PC-9 (cell line): ENCODE measurements at regions of chr10 and their contacts with region 1.

Region 1: DNA sequence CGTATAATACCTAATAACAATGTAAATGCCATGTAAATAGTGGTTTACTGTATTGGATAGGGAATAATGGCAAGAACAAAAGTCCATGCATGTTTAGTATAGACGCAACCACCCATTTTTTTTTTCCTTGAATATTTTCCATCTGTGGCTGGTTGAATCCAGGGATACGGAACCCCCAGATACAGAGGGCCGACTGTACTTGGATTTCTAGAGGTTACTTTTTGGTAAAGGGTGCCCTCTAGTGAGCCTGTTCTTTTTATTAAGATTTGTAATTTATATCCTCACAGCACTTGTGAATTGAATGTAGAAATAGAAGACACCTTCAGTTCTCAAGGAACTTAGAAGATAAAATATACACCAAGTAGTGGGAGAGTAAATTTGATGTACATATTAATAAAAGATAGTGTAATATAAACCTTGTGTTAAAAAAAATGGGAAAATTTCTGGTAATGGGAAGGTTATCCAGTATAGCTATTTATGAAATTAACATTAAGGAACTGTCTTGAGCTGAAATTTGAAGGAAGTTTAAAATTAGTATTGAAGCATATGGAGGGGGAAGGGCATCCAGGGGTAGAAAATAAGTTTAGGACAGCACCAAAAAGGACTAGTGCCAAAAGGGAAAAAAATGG is 32.0 kb downstream of the EXOC6 start:
- DNase-seq: peak in 1 of 2 experiments; percentile 9
- H3K4me3 ChIP-seq: no peak overlapping the region
- H3K27ac ChIP-seq: no peak overlapping the region
- H3K4me1 ChIP-seq: no peaks in the 10 kb centered on the region
- H3K27me3 ChIP-seq: no peaks in the 10 kb centered on the region
- CTCF ChIP-seq: peak; percentile 76

Region 2: GRCh38 chr10:92517034-92517655 is 363.2 kb before region 1 on chr10:
- CTCF ChIA-PET with region 1: no interaction called
- POLR2A ChIA-PET with region 1: no interaction called
- intact Hi-C with region 1: loop called (anchors 2 kb)
- DNase-seq: peak; percentile 22 to 39
- H3K4me3 ChIP-seq: no peak overlapping the region
- H3K27ac ChIP-seq: no peak overlapping the region
- H3K4me1 ChIP-seq: no peaks in the 10 kb centered on the region
- H3K27me3 ChIP-seq: no peaks in the 10 kb centered on the region
- CTCF ChIP-seq: peak; percentile 79

Region 3: DNA sequence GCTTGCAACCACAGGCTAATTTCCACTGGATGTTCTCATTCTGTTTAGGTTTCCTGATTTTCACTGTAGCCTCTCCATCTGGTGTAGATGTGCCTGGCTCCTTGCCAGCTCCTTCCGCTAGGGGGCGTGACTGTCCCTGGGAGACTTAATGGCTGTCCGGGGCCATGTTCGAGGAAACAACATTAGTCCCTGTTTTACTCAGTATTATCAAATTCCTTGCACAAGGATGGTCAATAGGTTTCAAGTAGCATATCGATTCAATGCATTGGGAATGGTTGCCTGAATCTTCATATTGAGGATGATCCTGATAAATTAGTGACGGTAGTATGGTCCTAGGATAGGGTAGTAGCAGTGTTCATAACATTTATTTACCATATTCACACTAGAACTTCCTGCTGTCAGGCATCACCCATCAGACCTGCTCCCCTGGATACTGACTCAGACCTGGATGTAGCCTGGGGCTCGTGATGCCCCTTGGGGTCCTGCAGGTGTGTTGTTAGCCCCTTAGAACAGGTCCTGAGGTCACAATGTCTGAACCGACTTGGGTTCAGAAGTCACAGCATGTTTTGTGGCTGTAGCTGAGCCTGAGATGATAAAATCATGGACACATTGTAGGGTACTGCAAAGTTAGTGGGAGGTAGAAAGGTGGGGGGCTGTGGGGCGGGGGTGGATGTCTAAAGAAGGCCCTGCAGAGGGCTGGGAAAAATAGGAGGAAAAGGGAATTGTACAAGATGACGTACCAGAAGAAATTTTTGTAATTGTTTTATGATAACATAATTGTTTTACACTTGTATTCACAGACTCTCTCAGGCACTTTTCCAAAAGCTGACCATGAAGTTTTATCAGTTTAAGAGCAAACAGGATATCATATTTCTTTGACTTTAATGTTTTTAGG is 40.9 kb before region 1 on chr10:
- CTCF ChIA-PET with region 1: interaction called, 4 read pairs
- POLR2A ChIA-PET with region 1: no interaction called
- intact Hi-C with region 1: loop called (anchors 5 kb)
- DNase-seq: no peak
- H3K4me3 ChIP-seq: no peak overlapping the region
- H3K27ac ChIP-seq: no peak overlapping the region
- H3K4me1 ChIP-seq: peaks cover 8% of the 10 kb centered on the region
- H3K27me3 ChIP-seq: no peaks in the 10 kb centered on the region
- CTCF ChIP-seq: no peak

Region 4: DNA sequence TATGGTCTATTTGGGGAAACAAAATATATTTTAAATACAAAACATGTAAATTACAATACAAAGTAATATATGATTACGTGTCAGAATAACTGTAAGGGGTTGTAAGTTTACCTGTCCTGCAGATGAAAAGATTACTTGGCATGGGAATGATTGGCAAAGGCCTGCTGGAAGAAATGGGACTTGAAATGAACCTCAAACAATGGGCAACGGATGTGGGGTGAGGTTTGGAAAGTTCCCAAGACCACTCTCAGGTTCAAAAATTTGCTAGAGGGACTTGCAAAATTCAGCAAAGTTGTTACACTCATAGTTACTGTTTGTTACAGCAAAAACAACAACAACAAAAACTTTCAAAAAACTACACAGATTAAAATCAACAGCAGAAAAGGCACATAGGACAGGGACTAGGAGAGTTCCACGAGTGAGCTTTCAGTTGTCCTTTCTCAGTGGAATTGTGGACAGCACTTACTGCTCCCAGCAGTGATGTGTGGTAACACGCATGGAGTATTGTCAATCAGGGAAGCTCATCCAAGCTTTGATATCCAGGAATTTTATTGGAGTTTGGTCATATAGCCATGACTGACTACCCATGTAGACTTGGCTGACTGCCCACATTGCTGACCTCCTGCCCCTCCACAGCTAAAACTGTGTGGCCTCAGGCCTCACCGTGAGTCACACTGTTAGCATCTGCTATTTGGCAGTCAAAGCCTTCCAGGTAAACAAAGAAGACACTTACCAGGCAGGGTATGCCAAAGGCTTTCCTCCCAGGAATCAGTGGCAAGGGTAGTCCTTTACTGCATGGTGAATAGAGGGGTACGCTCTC is 11.7 kb after region 1 on chr10:
- CTCF ChIA-PET with region 1: no interaction called
- POLR2A ChIA-PET with region 1: no interaction called
- intact Hi-C with region 1: no loop called
- DNase-seq: peak; percentile 88 to 95
- H3K4me3 ChIP-seq: no peak overlapping the region
- H3K27ac ChIP-seq: peak overlapping the region; percentile 81
- H3K4me1 ChIP-seq: peaks cover 52% of the 10 kb centered on the region
- H3K27me3 ChIP-seq: no peaks in the 10 kb centered on the region
- CTCF ChIP-seq: no peak

Region 5: GRCh38 chr10:93352638-93353383 is 472.5 kb after region 1 on chr10:
- CTCF ChIA-PET with region 1: interaction called, 3 read pairs
- POLR2A ChIA-PET with region 1: no interaction called
- intact Hi-C with region 1: loop called (anchors 1 kb)
- DNase-seq: no peak
- H3K4me3 ChIP-seq: no peak overlapping the region
- H3K27ac ChIP-seq: no peak overlapping the region
- H3K4me1 ChIP-seq: no peaks in the 10 kb centered on the region
- H3K27me3 ChIP-seq: no peaks in the 10 kb centered on the region
- CTCF ChIP-seq: peak; percentile 79

Region 6: GRCh38 chr10:93503075-93503474 is 622.7 kb after region 1 on chr10:
- CTCF ChIA-PET with region 1: no interaction called
- POLR2A ChIA-PET with region 1: no interaction called
- intact Hi-C with region 1: loop called (anchors 10 kb)
- DNase-seq: no peak
- H3K4me3 ChIP-seq: no peak overlapping the region
- H3K27ac ChIP-seq: no peak overlapping the region
- H3K4me1 ChIP-seq: no peaks in the 10 kb centered on the region
- H3K27me3 ChIP-seq: no peaks in the 10 kb centered on the region
- CTCF ChIP-seq: no peak